ENCODE measurements at regions of chr1 and their contacts with region 1.

Region 1: GRCh38 chr1:200971955-200972711 is 51.4 kb downstream of the KIF21B start:
- DNase-seq: peak; percentile 72 to 84 (median 78)
- H3K4me3 ChIP-seq: no peak overlapping the region
- H3K27ac ChIP-seq: no peak overlapping the region
- H3K4me1 ChIP-seq: no peaks in the 10 kb centered on the region
- H3K27me3 ChIP-seq: no peaks in the 10 kb centered on the region
- CTCF ChIP-seq: peak; percentile 39 to 84 (median 63)
- EP300 ChIP-seq: no peak
- POLR2A ChIP-seq: no peak

Region 2: GRCh38 chr1:200811704-200812103 is 160.4 kb before region 1 on chr1:
- intact Hi-C with region 1: loop called in 1 of 4 experiments (anchors 5 kb)
- DNase-seq: no peak
- H3K4me3 ChIP-seq: no peak overlapping the region
- H3K27ac ChIP-seq: no peak overlapping the region
- H3K4me1 ChIP-seq: no peaks in the 10 kb centered on the region
- H3K27me3 ChIP-seq: no peaks in the 10 kb centered on the region
- CTCF ChIP-seq: no peak
- EP300 ChIP-seq: no peak
- POLR2A ChIP-seq: no peak

Region 3: DNA sequence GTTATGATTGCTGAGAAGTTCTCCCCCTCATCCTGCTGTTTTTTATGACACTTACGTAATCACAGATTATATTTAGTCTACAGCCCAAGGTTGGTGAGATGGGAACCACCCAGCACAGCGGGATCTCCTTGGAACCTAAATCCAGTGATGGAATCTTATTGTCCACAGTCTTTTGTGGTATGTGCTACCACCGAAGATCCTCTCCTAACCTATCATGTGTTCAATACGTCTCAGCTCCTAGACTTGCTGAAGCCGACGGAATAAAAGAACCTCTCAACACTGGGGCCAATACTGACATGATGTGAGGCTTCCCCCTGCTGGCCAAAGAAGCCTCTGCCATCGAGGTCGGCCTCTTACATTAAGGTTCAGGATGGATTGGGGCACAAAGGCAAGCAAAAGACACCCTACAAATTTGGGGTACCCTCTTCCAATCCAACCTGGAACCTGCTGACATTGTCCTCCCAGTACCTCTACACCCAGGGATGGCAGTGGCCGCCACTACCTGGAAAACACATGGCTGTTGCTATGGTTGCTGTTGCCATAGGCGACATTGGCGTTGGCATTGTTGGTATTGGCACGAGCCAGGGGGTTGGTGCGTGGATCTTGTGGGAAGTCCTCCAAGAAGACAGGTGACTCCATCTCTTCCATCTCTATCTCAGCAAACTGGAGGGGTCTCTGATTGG is 70.8 kb after region 1 on chr1:
- intact Hi-C with region 1: loop called in 3 of 4 experiments (anchors 5 kb)
- DNase-seq: peak in 2 of 5 donors; percentile 46 to 59
- H3K4me3 ChIP-seq: no peak overlapping the region
- H3K27ac ChIP-seq: no peak overlapping the region
- H3K4me1 ChIP-seq: no peaks in the 10 kb centered on the region
- H3K27me3 ChIP-seq: no peaks in the 10 kb centered on the region
- CTCF ChIP-seq: peak in 2 of 3 donors; percentile 33 to 58
- EP300 ChIP-seq: no peak
- POLR2A ChIP-seq: no peak

Region 4: DNA sequence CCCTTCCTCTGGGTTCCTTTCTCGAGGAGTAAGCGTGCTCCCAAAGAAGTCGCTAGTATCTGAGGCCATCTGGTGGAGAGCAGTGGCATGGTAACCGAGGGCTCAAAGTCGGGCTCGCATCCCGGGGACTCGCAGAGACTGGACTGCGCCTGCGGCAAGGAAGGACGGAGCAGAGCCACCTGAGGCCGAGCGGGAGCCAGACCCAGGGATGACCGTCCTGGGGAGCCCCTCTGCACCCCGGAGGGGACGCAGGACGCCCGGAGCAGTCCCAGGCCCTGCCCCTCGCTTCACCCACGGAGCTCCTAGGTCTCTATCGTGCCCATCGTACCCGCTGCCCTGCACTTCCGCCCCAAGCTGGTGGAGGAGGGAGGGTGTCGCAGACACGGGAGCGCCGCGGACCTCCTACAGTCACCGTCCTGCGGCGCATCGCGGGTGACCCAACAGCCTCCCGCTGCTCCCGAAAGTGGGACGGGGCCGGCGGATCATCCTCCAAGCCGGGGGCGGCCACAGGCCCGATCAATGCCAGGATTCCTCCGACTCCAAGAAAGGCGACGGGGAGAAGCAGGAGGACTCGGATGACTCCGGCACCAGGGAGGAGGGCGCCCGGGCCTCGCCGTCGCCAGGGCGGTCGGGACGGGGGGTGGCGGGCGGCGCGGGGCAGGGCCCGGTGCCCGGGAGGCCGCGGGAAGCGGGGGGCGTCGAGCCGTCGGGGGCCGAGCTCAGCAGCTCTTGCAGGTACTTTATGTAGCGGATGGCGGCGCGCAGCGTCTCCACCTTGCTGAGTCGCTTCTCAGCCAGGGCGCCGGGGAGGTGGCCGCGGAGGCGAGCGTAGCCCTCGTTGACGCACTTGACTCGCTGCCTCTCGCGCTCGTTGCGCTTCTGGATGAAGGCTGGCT is 142.4 kb after region 1 on chr1:
- intact Hi-C with region 1: loop called (anchors 1 to 5 kb)
- DNase-seq: peak; percentile 82 to 86 (median 85)
- H3K4me3 ChIP-seq: peak overlapping the region; percentile 58
- H3K27ac ChIP-seq: no peak overlapping the region
- H3K4me1 ChIP-seq: no peaks in the 10 kb centered on the region
- H3K27me3 ChIP-seq: no peaks in the 10 kb centered on the region
- CTCF ChIP-seq: peak; percentile 61 to 82 (median 81)
- EP300 ChIP-seq: no peak
- POLR2A ChIP-seq: peak; percentile 29

Region 5: GRCh38 chr1:201224666-201225370 is 252.7 kb after region 1 on chr1:
- intact Hi-C with region 1: loop called (anchors 5 to 10 kb)
- DNase-seq: no peak
- H3K4me3 ChIP-seq: no peak overlapping the region
- H3K27ac ChIP-seq: no peak overlapping the region
- H3K4me1 ChIP-seq: no peaks in the 10 kb centered on the region
- H3K27me3 ChIP-seq: no peaks in the 10 kb centered on the region
- CTCF ChIP-seq: no peak
- EP300 ChIP-seq: no peak
- POLR2A ChIP-seq: no peak

Region 6: GRCh38 chr1:201229771-201230635 is 257.9 kb after region 1 on chr1:
- intact Hi-C with region 1: loop called in 2 of 4 experiments (anchors 10 kb)
- DNase-seq: no peak
- H3K4me3 ChIP-seq: no peak overlapping the region
- H3K27ac ChIP-seq: no peak overlapping the region
- H3K4me1 ChIP-seq: no peaks in the 10 kb centered on the region
- H3K27me3 ChIP-seq: no peaks in the 10 kb centered on the region
- CTCF ChIP-seq: no peak
- EP300 ChIP-seq: no peak
- POLR2A ChIP-seq: no peak

Region 7: GRCh38 chr1:202516434-202516877 is 1544.3 kb after region 1 on chr1:
- intact Hi-C with region 1: no loop called
- DNase-seq: no peak
- H3K4me3 ChIP-seq: no peak overlapping the region
- H3K27ac ChIP-seq: no peak overlapping the region
- H3K4me1 ChIP-seq: peaks cover 4% of the 10 kb centered on the region
- H3K27me3 ChIP-seq: no peaks in the 10 kb centered on the region
- CTCF ChIP-seq: no peak
- EP300 ChIP-seq: no peak
- POLR2A ChIP-seq: no peak

Measured in ovary (tissue), 10 donors.